Naive thymus-derived CD4-positive, alpha-beta T cell (primary cell): ENCODE measurements at regions of chr7 and their contacts with region 1.

Region 1: DNA sequence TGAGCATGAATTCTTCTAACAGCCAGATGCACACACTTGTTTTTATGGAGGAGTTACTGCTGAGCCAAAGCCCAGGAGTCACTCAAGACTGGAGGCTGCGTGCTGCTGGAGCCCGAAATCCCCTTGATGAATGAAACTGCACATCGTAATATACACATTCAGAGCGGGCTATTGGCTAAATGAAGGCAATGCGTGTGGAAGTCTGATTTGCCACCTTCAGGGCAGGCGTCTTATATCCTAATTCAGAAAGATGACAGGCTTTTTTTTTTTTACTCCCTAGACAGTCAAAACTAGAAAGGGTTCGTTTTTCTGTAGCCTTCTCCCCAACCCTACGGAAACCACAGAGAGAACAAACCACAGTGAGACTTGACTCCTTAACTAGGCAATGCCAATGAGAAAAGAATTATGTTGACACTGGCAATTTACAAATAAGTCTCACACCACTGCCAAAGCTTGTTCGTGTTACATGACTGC is 227.2 kb upstream of the KLF14 start:
- DNase-seq: peak; percentile 37 to 88 (median 79)
- ATAC-seq: peak; percentile 87
- H3K4me3 ChIP-seq: peak overlapping the region; percentile 65
- H3K4me3 Mint-ChIP-seq: peak overlapping the region; percentile 87 to 98 (median 90)
- H3K27ac ChIP-seq: peak overlapping the region; percentile 80
- H3K27ac Mint-ChIP-seq: peak overlapping the region in 8 of 9 donors; percentile 94 to 100 (median 97)
- H3K4me1 ChIP-seq: peaks cover 50 to 60% of the 10 kb centered on the region in 2 donors
- H3K4me1 Mint-ChIP-seq: peaks cover 53 to 76% (median 69%) of the 10 kb centered on the region in 7 donors
- H3K27me3 ChIP-seq: no peaks in the 10 kb centered on the region
- H3K27me3 Mint-ChIP-seq: no peaks in the 10 kb centered on the region

Region 2: GRCh38 chr7:130896898-130897514 is 64.2 kb before region 1 on chr7:
- CTCF ChIA-PET with region 1: interaction called, 7 read pairs
- POLR2A ChIA-PET with region 1: no interaction called
- intact Hi-C with region 1: loop called (anchors 2 kb)
- DNase-seq: peak; percentile 60 to 76 (median 69)
- ATAC-seq: peak; percentile 84
- H3K4me3 ChIP-seq: no peak overlapping the region
- H3K4me3 Mint-ChIP-seq: peak overlapping the region in 7 of 10 donors; percentile 16 to 67 (median 37)
- H3K27ac ChIP-seq: no peak overlapping the region
- H3K27ac Mint-ChIP-seq: peak overlapping the region; percentile 61 to 92 (median 84)
- H3K4me1 ChIP-seq: peaks cover 16 to 35% of the 10 kb centered on the region in 2 donors
- H3K4me1 Mint-ChIP-seq: peaks cover 49 to 86% (median 83%) of the 10 kb centered on the region in 7 donors
- H3K27me3 ChIP-seq: no peaks in the 10 kb centered on the region
- H3K27me3 Mint-ChIP-seq: no peaks in the 10 kb centered on the region

Region 3: DNA sequence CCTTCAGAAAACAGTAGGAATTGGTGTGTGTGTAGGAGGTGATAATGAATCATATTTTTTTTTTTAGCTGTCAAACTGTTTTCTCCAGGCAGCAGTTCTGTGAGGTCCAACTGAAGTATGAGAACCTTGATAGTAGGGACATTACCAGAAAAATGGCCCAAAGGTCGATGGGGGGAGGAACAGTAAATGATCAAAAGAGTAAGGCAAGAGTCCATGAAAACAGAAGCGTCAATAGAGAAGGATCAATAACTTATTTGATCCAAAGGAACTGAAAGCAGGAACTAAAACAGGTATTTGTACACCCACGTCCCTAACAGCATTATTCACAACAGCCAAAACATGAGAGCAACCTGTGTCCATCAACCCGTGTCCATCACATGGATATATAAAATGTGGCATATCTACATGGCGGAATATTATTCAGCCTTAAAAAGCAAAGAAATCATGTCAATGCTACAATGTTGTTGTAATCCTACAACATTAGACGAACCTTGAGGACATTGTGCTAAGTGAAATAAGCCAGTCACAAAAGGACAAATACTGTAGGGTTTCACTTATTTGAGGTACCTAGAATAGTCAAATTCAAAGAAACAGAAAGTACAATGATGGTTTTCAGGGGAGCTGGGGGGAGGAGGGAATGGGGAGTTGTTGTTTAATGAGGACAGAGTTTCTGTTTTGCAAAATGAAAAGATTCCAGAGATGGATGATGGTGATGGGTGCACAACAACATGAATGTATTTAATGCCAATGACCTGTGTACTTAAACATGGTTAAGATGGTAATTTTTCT is 13.2 kb before region 1 on chr7:
- CTCF ChIA-PET with region 1: interaction called, 6 read pairs
- POLR2A ChIA-PET with region 1: interaction called, 9 read pairs
- intact Hi-C with region 1: loop called (anchors 1 kb)
- DNase-seq: peak in 4 of 9 donors; percentile 26 to 41 (median 30)
- ATAC-seq: peak; percentile 30
- H3K4me3 ChIP-seq: peak overlapping the region; percentile 7
- H3K4me3 Mint-ChIP-seq: peak overlapping the region; percentile 42 to 72 (median 62)
- H3K27ac ChIP-seq: peak overlapping the region; percentile 16
- H3K27ac Mint-ChIP-seq: peak overlapping the region in 8 of 9 donors; percentile 49 to 95 (median 74)
- H3K4me1 ChIP-seq: peaks cover 49 to 84% of the 10 kb centered on the region in 2 donors
- H3K4me1 Mint-ChIP-seq: peaks cover 42 to 62% (median 60%) of the 10 kb centered on the region in 7 donors
- H3K27me3 ChIP-seq: no peaks in the 10 kb centered on the region
- H3K27me3 Mint-ChIP-seq: no peaks in the 10 kb centered on the region

Region 4: GRCh38 chr7:131007394-131008330 is 46.5 kb after region 1 on chr7:
- CTCF ChIA-PET with region 1: no interaction called
- POLR2A ChIA-PET with region 1: no interaction called
- intact Hi-C with region 1: loop called (anchors 1 to 2 kb)
- DNase-seq: peak in 7 of 9 donors; percentile 51 to 69 (median 63)
- ATAC-seq: peak; percentile 72
- H3K4me3 ChIP-seq: no peak overlapping the region
- H3K4me3 Mint-ChIP-seq: peak overlapping the region in 9 of 10 donors; percentile 52 to 87 (median 69)
- H3K27ac ChIP-seq: peak overlapping the region; percentile 67
- H3K27ac Mint-ChIP-seq: peak overlapping the region; percentile 83 to 97 (median 88)
- H3K4me1 ChIP-seq: peaks cover 60 to 64% of the 10 kb centered on the region in 2 donors
- H3K4me1 Mint-ChIP-seq: peaks cover 68 to 94% (median 87%) of the 10 kb centered on the region in 7 donors
- H3K27me3 ChIP-seq: no peaks in the 10 kb centered on the region
- H3K27me3 Mint-ChIP-seq: no peaks in the 10 kb centered on the region

Region 5: GRCh38 chr7:131057015-131057793 is 96.0 kb after region 1 on chr7:
- CTCF ChIA-PET with region 1: no interaction called
- POLR2A ChIA-PET with region 1: no interaction called
- intact Hi-C with region 1: loop called in 1 of 2 experiments (anchors 1 kb)
- DNase-seq: peak in 7 of 9 donors; percentile 56 to 82 (median 76)
- ATAC-seq: peak; percentile 67
- H3K4me3 ChIP-seq: peak overlapping the region; percentile 11
- H3K4me3 Mint-ChIP-seq: peak overlapping the region; percentile 72 to 93 (median 82)
- H3K27ac ChIP-seq: peak overlapping the region; percentile 76
- H3K27ac Mint-ChIP-seq: peak overlapping the region; percentile 94 to 100 (median 98)
- H3K4me1 ChIP-seq: peaks cover 69 to 77% of the 10 kb centered on the region in 2 donors
- H3K4me1 Mint-ChIP-seq: peaks cover 54 to 87% (median 72%) of the 10 kb centered on the region in 7 donors
- H3K27me3 ChIP-seq: no peaks in the 10 kb centered on the region
- H3K27me3 Mint-ChIP-seq: no peaks in the 10 kb centered on the region

Region 6: GRCh38 chr7:131087756-131088658 is 126.8 kb after region 1 on chr7:
- CTCF ChIA-PET with region 1: no interaction called
- POLR2A ChIA-PET with region 1: no interaction called
- intact Hi-C with region 1: no loop called
- DNase-seq: no peak
- ATAC-seq: no peak
- H3K4me3 ChIP-seq: no peak overlapping the region
- H3K4me3 Mint-ChIP-seq: peak overlapping the region in 7 of 10 donors; percentile 21 to 69 (median 52)
- H3K27ac ChIP-seq: no peak overlapping the region
- H3K27ac Mint-ChIP-seq: peak overlapping the region in 6 of 9 donors; percentile 6 to 49 (median 28)
- H3K4me1 ChIP-seq: peaks cover 32 to 39% of the 10 kb centered on the region in 2 donors
- H3K4me1 Mint-ChIP-seq: peaks cover 22 to 95% (median 79%) of the 10 kb centered on the region in 7 donors
- H3K27me3 ChIP-seq: no peaks in the 10 kb centered on the region
- H3K27me3 Mint-ChIP-seq: no peaks in the 10 kb centered on the region

Region 7: DNA sequence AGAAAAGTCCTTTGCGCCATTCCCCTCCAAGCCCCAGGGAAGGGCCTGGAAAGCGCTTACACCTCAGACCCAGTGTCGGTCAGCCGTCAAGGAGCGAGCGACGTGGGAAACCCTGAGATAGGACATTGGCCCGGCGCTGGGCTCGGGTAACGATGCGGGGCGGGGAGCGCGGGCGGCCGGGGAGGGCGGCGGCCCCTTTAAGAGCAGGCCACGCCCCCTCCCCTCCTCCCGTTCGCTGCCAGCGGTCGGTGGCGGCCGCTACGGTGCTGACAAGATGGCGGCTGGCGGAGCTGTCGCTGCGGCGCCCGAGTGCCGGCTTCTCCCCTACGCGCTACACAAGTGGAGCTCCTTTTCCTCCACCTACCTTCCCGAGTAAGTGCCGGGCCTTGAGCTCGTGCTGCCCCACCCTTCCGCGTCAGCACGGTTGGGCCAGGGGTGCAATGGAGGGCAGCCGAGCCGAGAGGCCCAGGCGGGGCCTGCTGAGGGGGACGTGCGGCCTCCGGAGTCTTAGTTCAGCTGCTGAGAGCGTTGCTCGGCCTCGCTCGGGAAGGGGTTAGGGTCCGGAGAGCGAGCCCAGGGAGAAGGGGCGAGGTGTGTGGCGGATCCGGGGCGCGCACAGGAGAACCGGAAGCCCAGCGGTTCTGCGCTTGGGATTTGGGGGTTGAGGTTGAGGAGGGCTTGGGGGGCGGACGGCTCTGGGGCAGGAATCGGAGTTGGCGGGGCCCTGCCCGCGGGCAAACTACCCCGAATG is 366.6 kb after region 1 on chr7 and contains the start of gene MKLN1:
- CTCF ChIA-PET with region 1: no interaction called
- POLR2A ChIA-PET with region 1: interaction called, 6 read pairs
- intact Hi-C with region 1: loop called in 1 of 2 experiments (anchors 2 kb)
- DNase-seq: peak; percentile 82 to 91 (median 86)
- ATAC-seq: peak; percentile 99
- H3K4me3 ChIP-seq: peak within 1 kb of the TSS; percentile 88
- H3K4me3 Mint-ChIP-seq: peak within 1 kb of the TSS; percentile 88 to 100 (median 94)
- H3K27ac ChIP-seq: peak within 1 kb of the TSS; percentile 94
- H3K27ac Mint-ChIP-seq: peak within 1 kb of the TSS; percentile 86 to 99 (median 97)
- H3K4me1 ChIP-seq: peaks cover 26 to 43% of the 10 kb centered on the region in 2 donors
- H3K4me1 Mint-ChIP-seq: peaks cover 35 to 85% (median 71%) of the 10 kb centered on the region in 7 donors
- H3K27me3 ChIP-seq: no peaks in the 10 kb centered on the region
- H3K27me3 Mint-ChIP-seq: no peaks in the 10 kb centered on the region
- total RNA-seq, gene MKLN1: 42.0 to 69.8 (median 59.3) TPM